AG04449 (cell line): ENCODE measurements at regions of chr3 and their contacts with region 1.

Region 1: GRCh38 chr3:141231101-141231935 is at the start of gene PXYLP1:
- DNase-seq: no peak
- H3K4me3 ChIP-seq: peak within 1 kb of the TSS; percentile 71
- CTCF ChIP-seq: peak; percentile 57

Region 2: DNA sequence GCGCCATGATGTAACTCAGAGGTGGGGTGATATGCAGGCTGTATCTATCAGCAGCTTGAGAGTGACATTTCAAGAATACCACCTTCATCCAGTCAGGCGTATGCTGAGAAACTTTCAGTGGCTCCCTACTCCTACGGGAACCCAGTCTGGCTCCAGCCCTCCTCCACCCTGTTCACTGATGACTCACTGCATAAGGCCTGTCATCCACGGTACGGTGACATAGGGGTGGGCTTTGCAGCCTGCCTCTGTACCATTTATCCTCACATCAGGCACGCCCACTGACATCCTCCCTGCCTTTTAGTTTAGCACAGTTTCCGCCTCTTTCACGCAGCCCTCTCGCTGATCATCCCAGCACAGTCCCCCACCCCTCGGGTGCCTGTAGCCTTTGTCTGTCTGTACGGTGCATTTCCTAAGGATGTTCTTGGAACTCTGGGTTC is 12.0 kb after region 1 on chr3:
- CTCF ChIA-PET with region 1: interaction called, 109 read pairs
- POLR2A ChIA-PET with region 1: interaction called, 3 read pairs
- DNase-seq: no peak
- H3K4me3 ChIP-seq: no peak overlapping the region
- CTCF ChIP-seq: no peak

Region 3: DNA sequence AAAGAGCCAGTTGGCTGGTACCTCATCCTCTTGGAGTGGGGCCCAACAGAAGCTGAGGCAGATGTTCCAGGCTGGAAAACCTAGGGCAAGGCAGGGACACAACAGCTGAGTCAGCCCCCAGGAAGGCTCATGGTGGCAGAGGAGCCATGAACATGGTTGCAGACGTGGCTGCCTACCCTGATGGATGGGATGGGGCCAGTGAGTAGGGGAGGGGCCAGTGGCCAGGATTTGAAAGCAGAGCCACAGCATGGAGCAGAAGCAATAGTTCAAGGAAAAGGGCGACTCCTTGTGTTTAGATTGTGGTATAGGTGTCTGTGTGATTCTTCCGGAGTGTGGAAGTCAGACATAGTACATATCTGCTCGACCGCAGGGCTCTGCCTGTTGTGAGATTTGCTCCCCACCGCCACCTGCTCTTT is 24.5 kb after region 1 on chr3:
- CTCF ChIA-PET with region 1: interaction called, 109 read pairs
- POLR2A ChIA-PET with region 1: no interaction called
- DNase-seq: no peak
- H3K4me3 ChIP-seq: no peak overlapping the region
- CTCF ChIP-seq: no peak

Region 4: GRCh38 chr3:141279077-141279967 is 48.0 kb after region 1 on chr3:
- CTCF ChIA-PET with region 1: interaction called, 22 read pairs
- POLR2A ChIA-PET with region 1: no interaction called
- DNase-seq: no peak
- H3K4me3 ChIP-seq: no peak overlapping the region
- CTCF ChIP-seq: peak; percentile 31

Region 5: GRCh38 chr3:141311496-141312353 is 80.4 kb after region 1 on chr3:
- CTCF ChIA-PET with region 1: interaction called, 24 read pairs
- POLR2A ChIA-PET with region 1: interaction called, 3 read pairs
- DNase-seq: peak; percentile 88
- H3K4me3 ChIP-seq: peak overlapping the region; percentile 96
- CTCF ChIP-seq: peak; percentile 89

Region 6: GRCh38 chr3:141493184-141493583 is 261.9 kb after region 1 on chr3:
- CTCF ChIA-PET with region 1: no interaction called
- POLR2A ChIA-PET with region 1: no interaction called
- DNase-seq: no peak
- H3K4me3 ChIP-seq: no peak overlapping the region
- CTCF ChIP-seq: no peak